HepG2 (cell line): ENCODE measurements at regions of chr6 and their contacts with region 1.

Region 1: GRCh38 chr6:87472525-87473418 is at the start of gene SLC35A1:
- DNase-seq: peak; percentile 60
- ATAC-seq: peak; percentile 98
- H3K4me3 ChIP-seq: peak within 1 kb of the TSS; percentile 91 to 100 (median 94)
- H3K27ac ChIP-seq: peak within 1 kb of the TSS; percentile 71
- H3K4me1 ChIP-seq: peaks cover 27% of the 10 kb centered on the region
- H3K27me3 ChIP-seq: no peaks in the 10 kb centered on the region; a peak in 1 of 5 replicates
- CTCF ChIP-seq: peak; percentile 38
- EP300 ChIP-seq: no peak
- POLR2A ChIP-seq: peak; percentile 63 to 89; a peak in 3 of 4 replicates
- RAD21 ChIP-seq: peak; percentile 7; the same call in 1 of the 2 replicates
- total RNA-seq, gene SLC35A1: 15.6 and 24.8 TPM in 2 replicates

Region 2: GRCh38 chr6:87322304-87323212 is 150.2 kb before region 1 on chr6 and contains the start of gene SMIM8:
- CTCF ChIA-PET with region 1: no interaction called
- POLR2A ChIA-PET with region 1: no interaction called
- in situ Hi-C with region 1: no loop called
- intact Hi-C with region 1: loop called (anchors 1 kb)
- DNase-seq: peak; percentile 73
- ATAC-seq: peak; percentile 99
- H3K4me3 ChIP-seq: peak within 1 kb of the TSS; percentile 99 to 100 (median 100)
- H3K27ac ChIP-seq: peak within 1 kb of the TSS; percentile 60
- H3K4me1 ChIP-seq: peaks cover 8% of the 10 kb centered on the region
- H3K27me3 ChIP-seq: peaks cover 0 to 2% of the 10 kb centered on the region in 2 experiments; a peak in 1 of 5 replicates
- CTCF ChIP-seq: peak; percentile 94
- EP300 ChIP-seq: 0 out of 4 replicates have a peak, but pooled peaks of 1 of the 2 experiments have one; percentile 17
- POLR2A ChIP-seq: peak; percentile 81 to 97
- RAD21 ChIP-seq: peak; percentile 80
- total RNA-seq, gene SMIM8: 10.0 and 12.2 TPM in 2 replicates

Region 3: GRCh38 chr6:87341899-87342298 is 130.9 kb before region 1 on chr6:
- CTCF ChIA-PET with region 1: no interaction called
- POLR2A ChIA-PET with region 1: no interaction called
- in situ Hi-C with region 1: no loop called
- intact Hi-C with region 1: no loop called
- DNase-seq: no peak
- ATAC-seq: peak; percentile 61
- H3K4me3 ChIP-seq: no peak overlapping the region
- H3K27ac ChIP-seq: no peak overlapping the region
- H3K4me1 ChIP-seq: peaks cover 36% of the 10 kb centered on the region
- H3K27me3 ChIP-seq: no peaks in the 10 kb centered on the region
- CTCF ChIP-seq: no peak
- EP300 ChIP-seq: no peak
- POLR2A ChIP-seq: no peak
- RAD21 ChIP-seq: no peak

Region 4: GRCh38 chr6:87407901-87408720 is 64.7 kb before region 1 on chr6 and contains the start of gene CFAP206:
- CTCF ChIA-PET with region 1: no interaction called
- POLR2A ChIA-PET with region 1: no interaction called
- in situ Hi-C with region 1: no loop called
- intact Hi-C with region 1: loop called (anchors 5 kb)
- DNase-seq: peak; percentile 67
- ATAC-seq: peak; percentile 97
- H3K4me3 ChIP-seq: peak within 1 kb of the TSS; percentile 67 to 87 (median 72)
- H3K27ac ChIP-seq: peak within 1 kb of the TSS; percentile 64
- H3K4me1 ChIP-seq: peaks cover 12% of the 10 kb centered on the region
- H3K27me3 ChIP-seq: no peaks in the 10 kb centered on the region
- CTCF ChIP-seq: peak; percentile 37
- EP300 ChIP-seq: no peak
- POLR2A ChIP-seq: no peak
- RAD21 ChIP-seq: peak; percentile 8; the same call in 1 of the 2 replicates
- total RNA-seq, gene CFAP206: not detected in 2 replicates